PC-9 (cell line): ENCODE measurements at regions of chr1 and their contacts with region 1.

Region 1: GRCh38 chr1:62508187-62508758 is 71.4 kb downstream of the USP1 start:
- DNase-seq: peak; percentile 3 to 37
- H3K4me3 ChIP-seq: no peak overlapping the region
- H3K27ac ChIP-seq: no peak overlapping the region
- H3K4me1 ChIP-seq: no peaks in the 10 kb centered on the region
- H3K27me3 ChIP-seq: no peaks in the 10 kb centered on the region
- CTCF ChIP-seq: peak; percentile 70

Region 2: DNA sequence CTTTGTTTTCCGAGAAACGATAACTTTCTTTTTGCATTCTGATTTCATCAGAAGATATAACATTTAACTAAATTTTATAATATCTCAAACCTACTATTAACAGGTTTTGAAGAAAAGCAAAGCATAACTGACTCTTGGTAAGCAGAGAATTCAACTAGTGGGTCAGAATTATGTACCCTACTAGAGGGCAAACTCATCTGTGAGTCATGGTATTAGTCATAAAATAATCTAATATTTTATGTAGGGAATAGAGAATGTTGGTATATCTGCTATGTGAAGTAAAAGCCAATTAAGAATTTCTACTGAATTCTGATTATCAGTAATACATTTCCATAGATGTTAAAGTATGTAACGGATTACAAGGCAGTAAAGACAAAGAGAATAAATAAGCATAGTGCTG is 14.6 kb before region 1 on chr1:
- CTCF ChIA-PET with region 1: interaction called, 10 read pairs
- POLR2A ChIA-PET with region 1: interaction called, 5 read pairs
- intact Hi-C with region 1: no loop called
- DNase-seq: no peak
- H3K4me3 ChIP-seq: no peak overlapping the region
- H3K27ac ChIP-seq: no peak overlapping the region
- H3K4me1 ChIP-seq: peaks cover 3% of the 10 kb centered on the region; the same call in 1 of the 2 replicates
- H3K27me3 ChIP-seq: no peaks in the 10 kb centered on the region
- CTCF ChIP-seq: no peak